HEK293T (cell line): ENCODE measurements at regions of chr5 and their contacts with region 1.

Region 1: GRCh38 chr5:17216176-17216973 is 1.1 kb upstream of the BASP1 start:
- DNase-seq: peak; percentile 68

Region 2: GRCh38 chr5:17305964-17306716 is 89.8 kb after region 1 on chr5:
- CTCF ChIA-PET with region 1: interaction called, 18 read pairs
- POLR2A ChIA-PET with region 1: interaction called, 5 read pairs
- DNase-seq: peak; percentile 49

Region 3: DNA sequence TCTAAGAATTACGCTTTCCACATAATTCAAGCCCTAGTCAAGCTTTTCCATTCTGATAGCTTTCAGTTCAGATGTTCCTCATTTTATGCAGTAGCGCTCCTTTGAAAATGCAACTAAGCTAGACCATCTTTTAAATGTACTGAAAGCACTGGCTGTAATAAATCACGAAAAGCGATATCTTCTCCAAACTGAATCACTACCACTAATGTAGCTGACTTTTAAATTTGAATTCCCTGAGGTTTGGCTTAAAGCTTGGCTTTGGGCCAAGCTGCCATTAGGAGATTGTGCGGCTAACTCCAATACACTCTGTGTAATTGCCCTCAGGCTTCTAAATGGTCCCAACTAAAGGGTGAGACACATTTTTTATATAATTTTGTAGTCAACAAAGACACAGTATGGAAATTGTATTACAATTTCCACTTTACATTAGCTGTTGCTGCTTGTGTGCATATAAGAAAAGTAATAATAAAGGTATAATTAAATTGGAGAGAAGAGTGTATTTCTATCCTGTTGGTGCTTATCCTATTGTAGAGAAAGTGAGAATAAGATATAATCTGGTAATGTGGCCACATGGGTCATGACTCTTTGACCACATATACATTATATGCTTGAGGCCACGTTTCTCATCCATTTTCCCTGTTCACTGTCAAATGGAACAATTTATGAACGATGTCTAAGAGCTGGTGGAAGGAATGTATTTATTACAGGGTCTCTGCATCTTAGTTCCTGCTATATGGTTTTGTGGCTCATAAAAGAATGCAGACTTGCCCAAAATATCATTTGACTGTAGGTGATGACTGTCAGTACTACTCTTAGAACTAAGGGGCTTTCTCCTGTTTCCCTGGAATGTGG is 163.0 kb after region 1 on chr5:
- CTCF ChIA-PET with region 1: interaction called, 10 read pairs
- POLR2A ChIA-PET with region 1: interaction called, 3 read pairs
- DNase-seq: peak; percentile 63

Region 4: GRCh38 chr5:18305297-18305924 is 1089.0 kb after region 1 on chr5:
- CTCF ChIA-PET with region 1: interaction called, 41 read pairs
- POLR2A ChIA-PET with region 1: no interaction called
- DNase-seq: peak; percentile 40